ENCODE measurements at regions of chr20 and their contacts with region 1.

Region 1: GRCh38 chr20:22675341-22675740 is 91.0 kb upstream of the FOXA2 start:
- DNase-seq: no peak
- ATAC-seq: no peak
- H3K4me3 ChIP-seq: no peak overlapping the region
- H3K27ac ChIP-seq: no peak overlapping the region
- H3K4me1 ChIP-seq: no peaks in the 10 kb centered on the region
- H3K27me3 ChIP-seq: peaks cover 0 to 35% (median 19%) of the 10 kb centered on the region in 7 donors
- CTCF ChIP-seq: no peak

Region 2: DNA sequence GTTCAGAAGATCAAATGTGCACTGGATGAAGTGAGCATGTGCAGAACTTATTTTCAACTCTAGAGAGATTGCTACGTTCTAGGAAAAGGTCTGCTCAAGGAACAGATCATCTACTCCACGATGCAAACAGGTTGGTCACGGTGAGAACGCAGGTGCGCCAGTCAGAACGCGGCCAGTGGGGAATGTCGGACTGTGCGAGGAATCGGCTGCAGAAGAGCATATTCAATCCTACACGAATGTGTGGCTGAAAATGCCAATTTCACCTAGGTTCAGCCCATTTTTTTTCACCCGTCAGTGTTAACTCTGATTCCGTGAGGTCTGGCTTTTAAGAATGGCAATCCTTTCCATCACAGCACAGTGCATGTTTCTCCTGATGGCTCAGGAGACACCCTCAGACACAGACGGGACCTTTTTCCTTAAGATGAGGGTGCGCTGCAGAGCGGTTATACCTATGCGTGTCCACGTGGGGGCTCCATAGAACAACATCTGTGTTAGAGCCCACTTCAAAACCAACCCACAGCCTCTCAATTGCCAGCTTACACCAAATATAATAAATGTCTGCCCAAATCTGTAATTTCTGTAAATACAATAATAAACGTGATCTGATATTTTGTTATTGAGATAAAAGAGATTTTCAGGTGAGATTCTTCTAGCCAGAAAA is 341.3 kb before region 1 on chr20:
- intact Hi-C with region 1: loop called in 1 of 10 experiments (anchors 2 kb)
- DNase-seq: peak; percentile 18 to 19
- ATAC-seq: peak in 5 of 8 donors; percentile 49 to 82 (median 62)
- H3K4me3 ChIP-seq: no peak overlapping the region
- H3K27ac ChIP-seq: no peak overlapping the region
- H3K4me1 ChIP-seq: peaks cover 0 to 1% (median 0%) of the 10 kb centered on the region in 9 donors
- H3K27me3 ChIP-seq: peaks cover 0 to 95% (median 39%) of the 10 kb centered on the region in 7 donors
- CTCF ChIP-seq: peak in 8 of 9 donors; percentile 44 to 76 (median 70)

Region 3: DNA sequence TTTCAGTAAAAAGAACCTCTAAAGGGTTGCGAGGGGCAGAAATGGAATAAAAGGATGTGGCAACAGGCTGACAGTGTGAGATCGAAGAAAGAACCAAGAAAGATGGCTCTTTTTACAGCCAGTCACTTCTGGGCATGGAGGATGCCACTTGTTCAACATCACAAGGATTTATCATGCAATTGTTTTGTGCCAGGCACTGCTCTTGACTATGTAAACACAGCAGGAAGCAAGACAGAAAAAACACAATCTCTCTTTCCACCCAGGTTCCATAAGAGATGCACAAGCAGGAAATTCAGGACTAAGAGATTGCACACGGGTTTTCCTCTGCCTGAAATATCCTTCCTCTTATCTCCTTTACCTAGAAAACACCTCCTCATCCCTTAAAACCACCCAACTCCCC is 129.0 kb before region 1 on chr20:
- intact Hi-C with region 1: no loop called
- DNase-seq: no peak
- ATAC-seq: no peak
- H3K4me3 ChIP-seq: no peak overlapping the region
- H3K27ac ChIP-seq: no peak overlapping the region
- H3K4me1 ChIP-seq: no peaks in the 10 kb centered on the region
- H3K27me3 ChIP-seq: peaks cover 0 to 72% (median 41%) of the 10 kb centered on the region in 7 donors
- CTCF ChIP-seq: no peak

Measured in heart right ventricle (tissue), 16 donors.